ENCODE measurements at regions of chr16 and their contacts with region 1.

Region 1: GRCh38 chr16:11604783-11605558 is 18.3 kb upstream of the LITAF start:
- DNase-seq: no peak
- H3K4me3 ChIP-seq: no peak overlapping the region
- H3K27ac ChIP-seq: no peak overlapping the region
- H3K4me1 ChIP-seq: peaks cover 3 to 8% (median 4%) of the 10 kb centered on the region in 4 experiments; a peak in 6 of 7 replicates
- H3K27me3 ChIP-seq: no peaks in the 10 kb centered on the region
- CTCF ChIP-seq: no peak
- EP300 ChIP-seq: no peak
- POLR2A ChIP-seq: no peak
- RAD21 ChIP-seq: no peak

Region 2: DNA sequence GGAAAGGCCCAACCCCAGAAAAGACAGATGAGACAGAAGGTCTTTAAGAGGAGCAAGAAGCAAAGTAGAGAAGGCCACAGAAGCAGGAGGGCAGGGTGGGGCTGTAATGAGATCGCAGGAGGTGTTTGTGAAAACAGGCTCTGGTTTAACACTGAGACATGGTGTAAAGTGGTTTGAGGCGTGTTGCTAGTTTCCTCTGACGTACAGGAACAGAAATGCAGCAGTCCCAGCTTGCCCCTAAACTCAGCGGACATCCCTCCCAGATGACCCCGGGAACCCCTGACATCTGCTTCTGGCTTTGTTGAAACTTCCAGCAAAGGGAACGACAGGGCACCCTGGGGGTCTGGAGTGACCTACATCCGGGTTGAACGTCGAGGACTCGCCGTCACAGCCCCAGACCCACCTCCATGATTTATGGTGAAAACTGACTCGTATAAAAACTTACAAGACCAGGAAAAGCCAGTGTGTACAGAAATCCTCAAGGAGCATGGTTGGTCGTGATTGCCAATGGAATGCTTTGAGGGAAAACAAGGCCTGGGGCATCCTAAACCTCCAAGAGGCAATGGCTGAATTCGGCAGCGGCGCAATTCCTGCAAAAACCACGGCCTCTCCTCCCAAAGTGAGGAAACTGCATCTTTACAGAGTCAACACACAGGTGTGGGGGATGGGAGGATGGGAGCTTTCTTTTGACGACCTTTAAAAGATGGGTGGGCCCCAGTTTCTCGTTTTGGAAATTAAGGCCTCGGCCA is 44.1 kb before region 1 on chr16:
- CTCF ChIA-PET with region 1: no interaction called
- POLR2A ChIA-PET with region 1: no interaction called
- DNase-seq: peak in 1 of 2 experiments; percentile 56
- H3K4me3 ChIP-seq: no peak overlapping the region
- H3K27ac ChIP-seq: peak overlapping the region; percentile 27; the same call in 1 of the 2 replicates
- H3K4me1 ChIP-seq: peaks cover 3 to 14% (median 6%) of the 10 kb centered on the region in 4 experiments
- H3K27me3 ChIP-seq: no peaks in the 10 kb centered on the region
- CTCF ChIP-seq: no peak
- EP300 ChIP-seq: no peak
- POLR2A ChIP-seq: no peak
- RAD21 ChIP-seq: no peak

Region 3: GRCh38 chr16:11619327-11619851 is 14.4 kb after region 1 on chr16:
- CTCF ChIA-PET with region 1: interaction called, 11 read pairs
- POLR2A ChIA-PET with region 1: interaction called, 7 read pairs
- DNase-seq: no peak
- H3K4me3 ChIP-seq: no peak overlapping the region
- H3K27ac ChIP-seq: no peak overlapping the region
- H3K4me1 ChIP-seq: peaks cover 5 to 15% (median 7%) of the 10 kb centered on the region in 4 experiments
- H3K27me3 ChIP-seq: no peaks in the 10 kb centered on the region
- CTCF ChIP-seq: no peak
- EP300 ChIP-seq: no peak
- POLR2A ChIP-seq: no peak
- RAD21 ChIP-seq: no peak

Region 4: GRCh38 chr16:11672151-11672832 is 67.3 kb after region 1 on chr16:
- CTCF ChIA-PET with region 1: no interaction called
- POLR2A ChIA-PET with region 1: no interaction called
- DNase-seq: no peak
- H3K4me3 ChIP-seq: no peak overlapping the region
- H3K27ac ChIP-seq: no peak overlapping the region
- H3K4me1 ChIP-seq: peaks cover 5 to 31% (median 22%) of the 10 kb centered on the region in 4 experiments
- H3K27me3 ChIP-seq: peaks cover 0 to 4% (median 0%) of the 10 kb centered on the region in 4 experiments; a peak in 2 of 7 replicates
- CTCF ChIP-seq: no peak
- EP300 ChIP-seq: no peak
- POLR2A ChIP-seq: no peak
- RAD21 ChIP-seq: no peak